ENCODE measurements at regions of chr3 and their contacts with region 1.

Region 1: DNA sequence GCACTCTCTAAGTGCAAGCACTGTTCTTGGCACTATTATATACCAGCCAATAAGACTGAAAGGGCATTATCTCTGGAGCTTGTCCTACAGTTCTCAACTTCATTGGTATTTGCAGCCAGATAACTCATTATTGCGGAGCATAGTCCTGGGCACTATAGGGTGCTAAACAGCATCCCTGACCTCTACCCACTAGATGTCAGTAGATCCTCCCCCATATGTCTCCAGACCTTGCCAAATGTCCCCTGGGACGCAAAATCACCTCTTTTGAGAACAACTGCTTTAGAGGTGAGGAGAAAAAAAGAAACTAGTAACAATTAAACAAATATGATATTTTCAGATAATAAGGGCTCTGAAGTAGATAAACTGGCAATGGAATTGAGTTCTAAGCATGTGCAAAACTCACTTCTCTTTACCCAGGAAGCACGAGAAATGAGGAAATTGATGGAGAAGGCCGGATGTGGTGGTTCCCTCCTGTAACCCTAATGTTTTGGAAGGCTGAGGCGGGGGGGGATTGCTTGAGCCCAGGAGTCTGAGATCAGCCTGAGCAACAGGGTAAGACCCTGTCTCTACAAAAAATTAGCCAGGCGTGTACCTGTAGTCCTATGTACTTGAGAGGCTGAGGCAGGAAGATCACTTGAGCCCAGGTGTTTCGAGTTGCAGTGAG is 61.4 kb downstream of the FRMD4B start:
- DNase-seq: peak; percentile 74
- H3K4me3 Mint-ChIP-seq: no peak overlapping the region
- H3K27ac Mint-ChIP-seq: peak overlapping the region; percentile 94
- H3K4me1 Mint-ChIP-seq: peaks cover 53% of the 10 kb centered on the region
- H3K27me3 Mint-ChIP-seq: no peaks in the 10 kb centered on the region

Region 2: GRCh38 chr3:69161587-69162307 is 162.7 kb before region 1 on chr3:
- intact Hi-C with region 1: loop called (anchors 5 kb)
- DNase-seq: peak; percentile 81
- H3K4me3 Mint-ChIP-seq: no peak overlapping the region
- H3K27ac Mint-ChIP-seq: no peak overlapping the region
- H3K4me1 Mint-ChIP-seq: peaks cover 2% of the 10 kb centered on the region
- H3K27me3 Mint-ChIP-seq: peaks cover 6% of the 10 kb centered on the region

Region 3: DNA sequence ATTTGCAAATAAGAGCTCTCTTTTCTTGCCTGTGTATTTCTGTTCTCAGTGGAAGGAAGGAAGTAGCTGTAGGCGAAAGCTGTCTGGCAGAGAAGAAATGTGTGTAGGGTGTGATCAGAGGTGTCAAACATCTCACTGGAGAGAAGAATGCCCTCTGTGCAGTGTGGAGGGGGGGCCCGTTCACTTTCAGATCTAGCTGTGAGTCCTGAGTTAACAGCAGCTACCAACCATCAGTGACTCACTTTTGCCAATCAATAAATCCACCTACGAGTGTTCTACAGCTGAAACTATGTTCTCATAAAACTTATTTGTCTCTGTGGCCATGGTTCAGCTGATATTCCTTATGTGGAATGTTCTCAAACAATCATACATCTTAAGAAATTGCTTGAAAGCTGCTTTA is 42.3 kb before region 1 on chr3:
- intact Hi-C with region 1: loop called (anchors 1 kb)
- DNase-seq: peak; percentile 69
- H3K4me3 Mint-ChIP-seq: peak overlapping the region; percentile 50
- H3K27ac Mint-ChIP-seq: peak overlapping the region; percentile 87
- H3K4me1 Mint-ChIP-seq: peaks cover 18% of the 10 kb centered on the region
- H3K27me3 Mint-ChIP-seq: peaks cover under 1% of the 10 kb centered on the region

Region 4: DNA sequence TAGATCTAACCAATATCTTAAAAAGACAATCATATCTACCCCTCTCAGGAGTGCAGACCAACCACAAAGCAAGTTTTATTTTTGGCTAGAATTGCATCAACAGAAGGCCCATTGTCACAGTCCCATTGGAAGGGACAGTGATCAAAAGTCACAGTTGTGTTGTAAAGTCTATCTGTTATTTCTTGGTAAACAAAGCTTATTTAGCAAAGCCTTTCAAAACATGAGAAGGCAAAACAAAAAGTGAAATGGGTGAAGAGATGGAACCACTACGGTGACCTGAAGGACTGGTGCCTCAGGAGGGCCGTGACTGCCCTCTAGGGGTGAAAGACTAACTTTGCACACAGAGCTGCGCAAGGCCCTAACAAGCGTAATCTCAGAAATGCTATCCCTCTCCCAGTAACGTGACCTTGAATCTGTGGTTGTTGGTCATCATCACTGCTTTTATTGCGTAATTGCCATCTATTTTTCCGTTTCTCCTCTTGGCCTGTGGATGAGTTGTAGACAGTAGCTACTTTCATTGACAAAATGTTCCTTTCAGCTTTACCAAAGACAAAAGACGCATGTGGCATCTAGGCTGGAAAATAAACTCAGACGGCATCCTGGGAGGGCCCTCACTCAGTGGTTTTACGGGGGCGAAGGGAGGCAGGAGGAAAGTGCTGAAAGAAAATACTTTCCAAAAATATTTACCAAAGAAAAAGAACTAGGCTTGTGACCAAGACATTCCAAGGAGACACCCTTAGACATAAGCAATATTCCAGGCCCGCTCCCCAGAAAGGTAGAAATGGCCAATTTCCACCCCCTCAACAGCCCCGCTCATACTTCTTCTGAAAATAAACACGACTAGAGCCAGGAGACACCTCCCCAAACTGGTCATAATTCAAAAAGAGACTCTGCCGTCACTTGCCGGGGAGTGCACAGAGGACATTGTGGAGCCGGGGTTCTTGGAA is 18.0 kb before region 1 on chr3:
- intact Hi-C with region 1: loop called (anchors 1 kb)
- DNase-seq: peak; percentile 91
- H3K4me3 Mint-ChIP-seq: peak overlapping the region; percentile 62
- H3K27ac Mint-ChIP-seq: peak overlapping the region; percentile 66
- H3K4me1 Mint-ChIP-seq: peaks cover 19% of the 10 kb centered on the region
- H3K27me3 Mint-ChIP-seq: no peaks in the 10 kb centered on the region

Region 5: DNA sequence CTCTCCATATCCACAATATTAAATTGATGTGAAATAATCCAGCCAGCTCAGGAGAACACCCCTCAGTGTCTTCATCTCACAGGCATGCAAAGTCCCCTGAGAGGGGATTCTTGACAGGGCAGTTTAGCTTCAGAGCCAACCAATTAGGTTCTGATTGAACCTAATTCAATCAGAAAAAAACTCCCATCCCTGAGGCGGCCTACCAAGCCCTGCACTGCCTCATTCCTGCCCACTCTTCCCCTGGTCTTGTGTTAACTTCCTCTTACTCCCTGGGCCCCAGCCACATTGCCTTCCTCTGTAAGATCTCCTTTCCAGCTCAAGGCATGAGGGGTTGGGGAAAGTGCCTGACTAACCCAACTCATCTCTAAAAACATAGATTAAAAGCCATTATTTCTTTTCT is 15.3 kb after region 1 on chr3:
- intact Hi-C with region 1: no loop called
- DNase-seq: no peak
- H3K4me3 Mint-ChIP-seq: no peak overlapping the region
- H3K27ac Mint-ChIP-seq: no peak overlapping the region
- H3K4me1 Mint-ChIP-seq: peaks cover 2% of the 10 kb centered on the region
- H3K27me3 Mint-ChIP-seq: no peaks in the 10 kb centered on the region

Region 6: GRCh38 chr3:69359339-69359893 is 34.9 kb after region 1 on chr3:
- intact Hi-C with region 1: no loop called
- DNase-seq: no peak
- H3K4me3 Mint-ChIP-seq: no peak overlapping the region
- H3K27ac Mint-ChIP-seq: no peak overlapping the region
- H3K4me1 Mint-ChIP-seq: peaks cover 3% of the 10 kb centered on the region
- H3K27me3 Mint-ChIP-seq: peaks cover 24% of the 10 kb centered on the region

Region 7: DNA sequence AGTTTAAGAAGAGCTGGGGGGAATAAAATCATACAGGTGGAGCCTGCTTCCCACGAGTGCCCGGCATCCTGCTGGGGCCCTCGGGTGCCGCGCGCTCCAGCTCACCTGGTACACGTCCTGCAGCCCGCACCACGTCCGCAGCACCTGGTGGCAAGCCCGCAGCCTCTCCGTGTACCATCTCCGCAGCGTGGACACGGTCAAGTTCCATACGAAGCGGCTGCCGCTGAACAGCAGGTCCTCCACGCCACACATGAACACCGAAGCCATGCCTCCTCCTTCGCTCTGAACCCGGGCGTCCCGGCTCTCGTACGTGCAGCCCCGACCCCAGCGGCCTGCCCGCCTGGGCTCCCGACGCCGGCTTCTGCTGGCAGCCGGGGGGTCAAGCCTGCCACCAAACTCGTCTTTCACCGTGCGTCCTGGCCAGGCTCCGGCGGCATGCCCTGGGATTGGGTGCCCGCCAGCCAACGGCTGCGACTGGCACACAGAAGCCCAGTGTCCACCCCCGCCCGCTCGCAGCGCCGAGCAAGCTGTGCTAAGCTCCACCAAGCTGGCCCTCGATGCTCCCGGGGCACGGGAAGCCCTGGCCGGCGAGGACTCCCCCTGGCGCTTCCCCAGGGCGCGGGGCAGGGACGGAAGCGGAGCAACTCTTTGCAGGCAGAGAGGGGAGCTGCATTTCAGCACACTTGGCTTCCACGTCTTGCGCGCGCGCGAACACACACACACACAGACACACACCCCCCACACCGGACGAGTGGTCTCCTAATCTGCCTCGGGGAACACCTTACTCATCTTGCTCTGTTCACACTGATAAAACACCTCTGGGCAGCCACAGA is 61.4 kb after region 1 on chr3 and contains the start of gene FRMD4B:
- intact Hi-C with region 1: loop called (anchors 1 kb)
- DNase-seq: peak; percentile 82
- H3K4me3 Mint-ChIP-seq: peak within 1 kb of the TSS; percentile 81
- H3K27ac Mint-ChIP-seq: peak within 1 kb of the TSS; percentile 15
- H3K4me1 Mint-ChIP-seq: peaks cover 17% of the 10 kb centered on the region
- H3K27me3 Mint-ChIP-seq: peaks cover 70% of the 10 kb centered on the region
- total RNA-seq, gene FRMD4B: 59.1 and 60.9 TPM in 2 replicates

Region 8: DNA sequence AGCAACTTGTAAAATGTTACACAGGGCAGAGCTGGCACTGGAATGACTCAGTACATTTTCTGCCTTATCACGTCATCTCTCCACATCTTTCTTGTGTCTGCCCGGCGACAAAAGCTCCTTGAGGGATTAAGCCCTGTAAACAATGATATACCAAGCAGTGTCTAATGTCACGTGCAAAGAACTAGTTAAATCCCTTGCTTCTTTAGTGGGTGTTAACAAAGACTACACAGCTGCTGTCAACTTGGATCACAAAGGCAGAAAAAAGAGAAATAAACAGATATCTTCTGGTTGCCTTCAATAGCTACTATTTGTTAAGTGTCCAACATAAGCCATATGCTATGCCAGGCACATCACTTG is 109.5 kb after region 1 on chr3:
- intact Hi-C with region 1: loop called (anchors 1 kb)
- DNase-seq: no peak
- H3K4me3 Mint-ChIP-seq: no peak overlapping the region
- H3K27ac Mint-ChIP-seq: peak overlapping the region; percentile 76
- H3K4me1 Mint-ChIP-seq: peaks cover 40% of the 10 kb centered on the region
- H3K27me3 Mint-ChIP-seq: peaks cover 3% of the 10 kb centered on the region

Region 9: DNA sequence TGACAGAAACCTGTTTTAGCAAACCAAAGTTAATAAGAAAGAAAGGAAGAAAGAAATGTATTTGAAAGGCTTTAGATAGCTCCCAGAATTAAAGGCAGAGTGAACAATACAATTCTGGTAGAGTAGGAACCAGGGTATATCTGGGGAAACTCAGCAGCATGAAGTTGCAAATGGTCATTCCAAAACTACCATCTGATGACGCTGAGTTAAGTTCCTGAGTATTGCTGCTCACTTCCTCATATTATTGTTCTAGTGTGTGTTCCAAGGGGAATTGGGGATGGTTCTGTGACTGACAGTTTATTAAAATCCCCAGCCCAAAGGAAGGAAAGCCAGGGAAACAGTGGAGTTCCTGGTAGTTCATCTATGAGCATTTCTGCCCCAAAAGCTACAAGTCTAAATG is 149.7 kb after region 1 on chr3:
- intact Hi-C with region 1: no loop called
- DNase-seq: no peak
- H3K4me3 Mint-ChIP-seq: no peak overlapping the region
- H3K27ac Mint-ChIP-seq: no peak overlapping the region
- H3K4me1 Mint-ChIP-seq: no peaks in the 10 kb centered on the region
- H3K27me3 Mint-ChIP-seq: peaks cover 5% of the 10 kb centered on the region

Region 10: DNA sequence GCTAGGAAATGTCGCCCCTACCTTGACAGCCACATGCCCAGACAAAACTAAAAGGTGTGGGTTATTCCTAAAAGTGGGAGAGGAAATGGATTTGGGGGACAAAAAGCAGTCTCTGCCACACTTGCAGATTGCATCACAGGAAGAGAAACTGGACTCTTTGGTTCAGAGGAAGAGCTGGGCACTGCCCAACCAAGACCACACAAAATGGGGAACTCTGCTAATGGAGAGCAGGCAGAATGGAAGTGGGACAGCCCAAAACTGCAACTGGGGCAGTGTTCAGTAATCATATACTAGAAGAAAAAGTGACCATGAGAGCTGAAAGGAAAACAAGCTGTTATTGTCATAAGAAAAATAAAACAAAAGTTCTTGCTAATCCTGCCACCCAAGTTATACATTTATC is 200.3 kb after region 1 on chr3:
- intact Hi-C with region 1: no loop called
- DNase-seq: no peak
- H3K4me3 Mint-ChIP-seq: no peak overlapping the region
- H3K27ac Mint-ChIP-seq: no peak overlapping the region
- H3K4me1 Mint-ChIP-seq: no peaks in the 10 kb centered on the region
- H3K27me3 Mint-ChIP-seq: no peaks in the 10 kb centered on the region

Region 11: DNA sequence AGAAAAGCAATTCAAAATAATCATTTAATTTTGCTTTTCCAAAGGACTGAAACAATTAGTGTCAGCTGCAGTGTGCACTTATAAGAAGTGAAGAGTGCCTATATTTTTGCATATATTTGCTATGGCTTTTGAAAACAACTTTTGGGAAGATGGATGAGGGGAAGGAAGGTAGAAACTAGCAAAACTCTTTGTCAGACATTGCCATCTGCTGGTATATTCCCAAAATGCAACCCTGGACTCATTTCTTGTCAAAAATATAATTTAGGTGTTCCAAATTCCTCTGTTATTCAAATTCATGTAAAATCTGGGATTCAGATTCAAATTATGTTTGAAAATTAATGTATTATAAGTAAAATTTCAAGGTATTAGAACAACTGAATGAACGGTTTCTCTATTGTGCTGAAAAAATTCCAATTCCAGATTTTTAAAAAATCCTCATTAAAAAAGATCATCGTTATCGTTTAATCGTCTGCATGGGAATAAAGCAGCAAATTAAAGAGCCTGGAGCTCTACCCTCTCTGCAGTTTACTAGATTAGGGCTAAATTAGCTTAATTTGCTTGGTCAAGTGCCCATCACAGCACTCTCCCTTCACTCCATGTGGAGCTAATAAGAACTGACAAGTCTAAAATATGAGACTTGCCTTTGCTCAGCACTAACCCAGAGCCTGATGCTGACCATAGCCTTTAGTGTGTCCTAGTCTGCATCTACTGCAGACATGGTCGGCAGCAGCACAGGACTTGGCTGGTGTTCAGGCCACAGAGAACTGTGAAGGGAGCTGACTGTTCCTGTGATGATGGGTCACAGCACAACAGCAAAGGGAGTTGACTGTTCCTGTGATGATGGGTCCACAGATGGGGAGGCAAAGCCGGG is 346.8 kb after region 1 on chr3:
- intact Hi-C with region 1: loop called (anchors 5 kb)
- DNase-seq: peak; percentile 65
- H3K4me3 Mint-ChIP-seq: no peak overlapping the region
- H3K27ac Mint-ChIP-seq: no peak overlapping the region
- H3K4me1 Mint-ChIP-seq: no peaks in the 10 kb centered on the region
- H3K27me3 Mint-ChIP-seq: no peaks in the 10 kb centered on the region